GM13976 (cell line): ENCODE measurements at regions of chr9 and their contacts with region 1.

Region 1: GRCh38 chr9:137549875-137550601 is at the start of gene PNPLA7:
- DNase-seq: peak; percentile 74
- CTCF ChIP-seq: no peak

Region 2: DNA sequence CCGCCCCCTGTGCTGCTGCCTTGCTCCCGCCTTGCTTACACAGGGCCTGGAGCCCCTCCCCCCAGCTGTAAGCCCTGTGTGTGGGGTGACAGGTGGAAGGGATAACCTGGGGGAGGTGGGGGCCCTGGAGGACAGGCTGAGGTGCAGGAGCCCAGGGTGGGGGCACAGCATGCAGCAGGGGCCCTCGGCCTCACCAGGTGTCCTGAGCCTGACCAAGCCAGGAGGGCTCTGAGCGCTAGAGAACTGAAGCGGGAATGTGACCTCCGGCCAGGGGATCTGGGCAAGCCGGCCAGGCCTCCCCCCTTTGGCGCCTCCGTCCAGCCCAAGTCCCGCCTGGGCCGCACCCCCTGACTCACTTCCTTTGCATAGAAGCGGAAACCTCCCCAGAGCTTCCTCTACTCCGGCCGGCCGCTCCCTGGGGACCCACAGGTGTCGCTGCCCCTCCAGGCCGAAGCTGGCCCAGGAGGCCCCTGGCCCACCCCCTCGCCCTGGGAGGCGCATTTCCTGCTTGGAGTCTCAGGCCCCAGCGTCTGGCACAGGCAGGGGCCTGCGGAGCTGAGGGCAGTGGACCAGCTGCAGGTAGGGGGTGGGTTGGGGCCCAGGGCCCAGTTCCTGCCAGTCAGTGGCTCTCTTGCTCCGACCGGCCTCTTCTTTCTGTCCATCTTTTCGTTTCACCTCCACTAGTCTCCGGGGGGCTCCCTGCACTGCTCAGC is 272.6 kb before region 1 on chr9 and contains the start of gene TOR4A:
- in situ Hi-C with region 1: loop called (anchors 25 kb)
- DNase-seq: peak; percentile 95
- CTCF ChIP-seq: peak; percentile 26

Region 3: DNA sequence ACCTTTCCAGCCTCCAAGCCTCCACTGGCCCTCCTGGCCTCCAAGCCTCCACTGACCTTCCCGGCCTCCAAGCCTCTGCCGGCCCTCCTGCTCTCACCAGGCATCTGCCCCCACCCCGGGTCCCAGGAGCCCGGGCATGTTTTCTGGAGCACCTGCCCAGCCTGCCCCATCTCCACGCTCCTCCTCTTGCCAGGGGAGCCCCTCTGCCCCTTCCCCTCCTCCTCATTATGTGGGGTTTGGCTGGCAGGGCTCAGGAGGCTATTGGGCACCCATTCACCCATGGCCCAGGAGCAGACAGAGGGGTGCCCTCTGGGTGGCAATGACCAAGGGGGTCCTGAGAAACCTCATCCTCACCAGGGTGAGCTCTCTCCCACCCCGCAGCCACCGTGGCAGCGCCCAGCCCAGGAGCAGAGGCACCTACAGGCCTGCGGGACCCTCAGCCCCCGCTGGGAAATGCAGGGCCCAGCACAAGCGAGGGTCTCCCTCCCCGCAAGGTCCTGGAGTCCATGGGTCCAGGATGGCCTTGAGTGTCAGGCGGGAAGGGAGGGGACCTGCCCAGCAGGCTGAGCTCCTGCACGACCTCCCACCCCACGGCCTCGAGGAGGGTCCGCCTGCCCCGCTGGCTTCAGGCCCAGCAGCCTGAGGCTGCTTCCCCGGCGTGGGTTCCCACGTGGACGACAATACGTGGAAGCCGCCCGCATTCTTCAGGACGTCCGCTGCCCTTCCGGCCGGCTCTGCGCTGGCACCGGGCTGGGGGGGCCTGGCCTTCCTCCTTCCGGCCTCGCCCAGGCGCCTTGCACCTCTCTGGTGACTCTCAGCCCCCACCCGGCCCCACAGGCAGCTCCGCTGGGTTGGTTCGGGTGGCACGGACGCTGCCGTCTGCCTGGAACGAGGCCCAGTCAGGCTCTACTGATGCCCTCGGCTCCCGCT is 196.6 kb before region 1 on chr9:
- in situ Hi-C with region 1: no loop called
- DNase-seq: no peak
- CTCF ChIP-seq: no peak

Region 4: GRCh38 chr9:137740312-137740711 is 190.3 kb after region 1 on chr9:
- in situ Hi-C with region 1: no loop called
- DNase-seq: no peak
- CTCF ChIP-seq: no peak